Activated CD4-positive, alpha-beta T cell treated with anti-CD3 and anti-CD28 coated beads, Interleukin-2, amount 10 ng/mL, durations not matched to agents 24 days and 14 days (primary cell): ENCODE measurements at regions of chr1 and their contacts with region 1.

Region 1: GRCh38 chr1:117895482-117896114 is 33.8 kb downstream of the GDAP2 start:
- DNase-seq: peak; percentile 88
- H3K4me3 Mint-ChIP-seq: no peak overlapping the region
- H3K27ac Mint-ChIP-seq: no peak overlapping the region
- H3K4me1 Mint-ChIP-seq: no peaks in the 10 kb centered on the region
- H3K27me3 Mint-ChIP-seq: no peaks in the 10 kb centered on the region

Region 2: DNA sequence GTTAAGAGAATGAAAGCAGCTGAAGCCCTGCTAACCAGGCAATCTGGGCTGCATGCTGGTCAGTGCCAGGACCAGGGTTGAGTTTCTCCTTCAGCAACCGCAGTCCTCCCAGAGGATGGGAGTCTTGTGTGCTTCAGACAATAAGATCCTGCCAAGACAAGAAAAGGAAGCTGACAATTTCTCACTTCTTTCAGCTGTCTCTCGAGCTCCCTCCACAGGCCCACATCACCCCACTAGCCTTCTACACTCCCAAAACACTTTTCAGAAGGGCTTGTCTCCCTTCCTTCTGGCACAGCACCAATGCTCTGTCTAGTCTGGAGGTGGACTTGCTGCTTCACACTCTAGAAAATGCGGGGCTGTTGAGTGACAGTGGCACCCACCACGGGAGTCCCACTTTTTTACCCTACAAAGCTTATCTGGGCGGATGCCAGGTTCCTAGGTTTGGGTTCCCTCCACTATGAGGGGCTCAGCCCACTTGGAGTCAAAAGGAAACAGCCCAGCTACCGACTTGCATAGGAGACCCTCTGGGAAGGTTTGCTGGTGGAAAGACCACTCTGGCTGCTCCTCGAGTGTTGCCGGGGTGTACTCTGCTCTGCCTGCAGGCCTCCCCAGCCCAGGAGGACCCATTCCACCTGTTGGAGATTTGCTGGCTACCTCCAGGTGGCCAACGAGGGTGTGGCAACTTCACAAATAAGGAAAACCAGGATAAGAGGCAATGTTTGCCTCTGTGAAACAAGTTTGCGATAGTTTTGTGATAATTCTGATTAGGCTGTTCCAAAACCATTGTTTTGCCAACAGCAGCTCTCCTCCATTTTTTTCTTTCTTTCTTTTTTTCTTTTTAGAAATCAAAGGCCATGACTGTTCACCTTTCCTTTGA is 220.8 kb before region 1 on chr1:
- intact Hi-C with region 1: loop called (anchors 10 kb)
- DNase-seq: peak; percentile 85
- H3K4me3 Mint-ChIP-seq: no peak overlapping the region
- H3K27ac Mint-ChIP-seq: no peak overlapping the region
- H3K4me1 Mint-ChIP-seq: peaks cover 21% of the 10 kb centered on the region
- H3K27me3 Mint-ChIP-seq: peaks cover 22% of the 10 kb centered on the region